ENCODE measurements at regions of chr15 and their contacts with region 1.

Region 1: DNA sequence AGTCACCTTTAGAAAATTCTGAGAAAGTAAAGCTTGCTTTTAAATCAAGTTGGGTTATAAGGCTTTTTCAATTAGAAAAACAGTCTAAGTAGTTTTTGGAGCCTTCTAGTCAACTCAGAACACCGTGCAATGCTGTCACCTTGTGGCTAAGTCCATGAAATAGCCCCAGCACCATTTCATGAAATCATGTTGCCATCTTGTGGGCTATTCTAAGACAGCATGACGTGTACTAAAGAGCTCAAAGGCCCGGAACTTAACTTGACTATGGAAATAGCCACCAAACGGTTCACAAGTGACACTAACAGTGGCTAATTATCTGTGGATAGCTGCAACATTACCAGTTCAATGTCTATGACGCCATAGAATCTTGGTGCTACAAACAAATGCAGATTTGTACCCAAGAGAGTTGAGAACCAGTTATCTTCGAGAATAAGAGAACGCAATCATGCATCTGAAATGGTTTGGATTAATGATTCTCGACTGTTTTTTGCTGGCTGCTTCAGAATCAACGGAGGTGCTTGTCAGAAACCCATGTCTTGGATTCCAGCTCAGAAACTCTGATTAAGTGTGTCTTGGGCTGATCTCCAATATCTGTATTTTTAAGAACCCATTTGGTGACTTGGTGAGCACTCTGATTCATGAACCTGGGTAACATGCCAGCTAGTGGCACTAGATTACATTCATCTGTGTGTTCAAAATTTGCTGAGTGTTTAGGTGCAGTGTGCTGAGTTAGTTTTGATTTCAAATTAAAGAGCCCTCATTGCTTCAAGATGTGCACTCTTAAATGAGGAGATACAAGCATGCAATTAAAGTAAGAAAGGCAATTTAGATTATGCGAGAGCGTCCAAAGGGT is 111.2 kb upstream of the MCTP2 start:
- DNase-seq: peak; percentile 84
- H3K4me3 ChIP-seq: no peak overlapping the region
- H3K27ac ChIP-seq: no peak overlapping the region
- H3K27me3 ChIP-seq: no peaks in the 10 kb centered on the region
- CTCF ChIP-seq: peak; percentile 100

Region 2: GRCh38 chr15:93030430-93031105 is 1089.6 kb before region 1 on chr15:
- CTCF ChIA-PET with region 1: interaction called, 75 read pairs
- POLR2A ChIA-PET with region 1: interaction called, 3 read pairs
- DNase-seq: peak; percentile 26
- H3K4me3 ChIP-seq: no peak overlapping the region
- H3K27ac ChIP-seq: peak overlapping the region; percentile 11
- H3K27me3 ChIP-seq: no peaks in the 10 kb centered on the region
- CTCF ChIP-seq: peak; percentile 84

Region 3: GRCh38 chr15:93974804-93975481 is 145.2 kb before region 1 on chr15:
- CTCF ChIA-PET with region 1: interaction called, 44 read pairs
- POLR2A ChIA-PET with region 1: no interaction called
- DNase-seq: peak; percentile 16
- H3K4me3 ChIP-seq: no peak overlapping the region
- H3K27ac ChIP-seq: no peak overlapping the region
- H3K27me3 ChIP-seq: peaks cover 4% of the 10 kb centered on the region
- CTCF ChIP-seq: peak; percentile 58

Region 4: DNA sequence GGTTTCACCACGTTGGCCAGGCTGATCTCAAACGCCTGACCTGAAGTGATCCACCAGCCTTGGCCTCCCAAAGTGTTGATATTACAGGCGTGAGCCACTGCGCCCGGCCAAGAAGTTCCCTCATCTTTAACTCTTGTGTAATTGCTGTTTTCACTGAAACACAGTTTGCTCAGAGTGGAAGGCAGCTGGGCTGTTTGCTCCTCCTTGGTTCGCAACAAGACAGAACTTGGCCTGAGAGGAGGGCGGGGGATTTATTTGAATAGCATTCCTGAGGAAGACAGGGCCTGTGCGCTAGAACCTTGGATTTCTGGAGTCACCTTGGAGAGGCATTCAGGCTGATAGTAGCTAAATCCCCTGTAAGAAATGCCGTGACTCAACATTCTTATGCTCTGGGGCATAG is 115.5 kb before region 1 on chr15:
- CTCF ChIA-PET with region 1: interaction called, 218 read pairs
- POLR2A ChIA-PET with region 1: no interaction called
- DNase-seq: no peak
- H3K4me3 ChIP-seq: no peak overlapping the region
- H3K27ac ChIP-seq: no peak overlapping the region
- H3K27me3 ChIP-seq: no peaks in the 10 kb centered on the region
- CTCF ChIP-seq: no peak

Region 5: GRCh38 chr15:94080418-94080817 is 39.7 kb before region 1 on chr15:
- CTCF ChIA-PET with region 1: interaction called, 27 read pairs
- POLR2A ChIA-PET with region 1: no interaction called
- DNase-seq: no peak
- H3K4me3 ChIP-seq: no peak overlapping the region
- H3K27ac ChIP-seq: no peak overlapping the region
- H3K27me3 ChIP-seq: no peaks in the 10 kb centered on the region
- CTCF ChIP-seq: no peak

Region 6: DNA sequence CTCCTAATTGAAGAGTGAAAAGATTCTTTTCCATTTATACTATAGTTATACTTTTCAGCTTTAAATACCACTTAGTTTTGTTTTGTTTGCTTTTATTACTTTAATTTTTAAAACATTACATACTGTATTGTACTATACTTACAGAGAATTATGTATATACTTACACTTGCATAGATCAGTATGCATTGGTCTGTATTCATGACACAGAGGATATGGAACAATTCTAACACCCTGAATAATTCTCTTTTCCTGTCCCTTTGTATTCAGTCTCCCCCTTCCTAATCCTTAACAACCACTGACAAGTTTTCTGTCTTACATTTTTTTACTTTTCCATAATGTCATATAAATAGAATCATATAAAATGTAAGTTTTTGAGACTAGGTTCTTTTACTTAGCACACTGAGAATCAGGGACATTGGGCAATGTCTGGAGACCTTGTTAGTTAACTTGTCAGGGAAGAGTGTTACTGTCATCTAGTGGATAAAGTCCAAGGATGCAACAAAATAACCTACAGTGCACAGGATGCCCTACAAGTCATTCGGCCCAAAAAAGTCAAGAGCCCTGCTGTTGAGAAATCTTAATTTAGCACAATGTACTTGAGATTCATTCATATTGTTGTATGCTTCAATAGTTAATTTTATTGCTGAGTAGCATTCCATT is 15.5 kb after region 1 on chr15:
- CTCF ChIA-PET with region 1: interaction called, 35 read pairs
- POLR2A ChIA-PET with region 1: no interaction called
- DNase-seq: no peak
- H3K4me3 ChIP-seq: no peak overlapping the region
- H3K27ac ChIP-seq: no peak overlapping the region
- H3K27me3 ChIP-seq: peaks cover 3% of the 10 kb centered on the region
- CTCF ChIP-seq: 0 out of 2 replicates have a peak, but pooled peaks have one; percentile 13

Measured in AG04450 (cell line).